ENCODE measurements at regions of chr2 and their contacts with region 1.

Region 1: DNA sequence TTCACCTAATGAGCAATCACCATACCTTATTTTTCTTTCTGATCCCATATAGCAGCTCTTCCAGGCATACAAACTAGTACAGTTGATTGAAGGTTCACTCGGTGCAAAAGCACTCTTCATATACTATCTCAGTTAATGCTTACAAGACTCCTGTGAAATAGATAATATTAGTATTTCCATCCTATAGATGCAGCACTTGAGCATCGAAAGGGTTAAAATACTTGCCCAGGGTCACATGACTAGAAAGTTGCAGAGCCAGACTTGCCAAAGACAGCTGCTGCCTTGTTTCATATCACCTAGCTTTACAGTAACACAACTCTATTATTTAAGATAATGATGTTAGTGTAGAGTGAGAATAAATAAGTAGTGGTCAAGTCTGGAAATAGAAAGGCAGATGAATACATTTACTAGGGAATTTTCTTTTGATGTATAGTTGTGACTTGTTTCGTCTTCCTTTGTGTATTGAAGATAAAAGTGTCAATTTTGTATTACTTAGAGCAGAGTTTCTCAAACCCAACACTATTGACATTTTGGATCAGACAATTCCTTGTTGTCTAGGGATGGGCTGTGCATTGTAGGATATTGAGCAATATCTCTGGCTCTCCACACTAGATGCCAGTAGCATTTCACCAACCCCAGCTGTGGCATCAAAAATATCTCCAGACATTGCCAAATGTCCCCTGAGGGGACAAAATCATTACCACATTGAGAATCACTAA is 466.1 kb upstream of the TNP1 start:
- DNase-seq: no peak

Region 2: DNA sequence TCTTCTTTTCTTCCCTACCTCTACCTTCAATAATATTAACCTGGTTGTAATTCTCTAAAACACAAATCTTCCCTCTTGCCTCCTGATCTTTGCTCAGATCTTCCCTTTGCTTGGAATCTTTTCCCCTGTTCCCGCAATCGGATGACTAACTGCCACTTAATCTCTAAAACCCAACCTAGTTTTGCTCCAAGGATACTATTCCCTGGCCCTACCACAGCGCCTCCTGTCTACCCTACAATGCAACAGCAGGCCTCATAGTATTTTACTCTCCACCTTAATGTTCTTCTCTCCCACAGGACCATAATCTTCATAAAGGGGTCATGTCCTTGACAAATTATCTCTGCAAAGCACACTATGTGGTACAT is 219.3 kb before region 1 on chr2:
- intact Hi-C with region 1: no loop called
- DNase-seq: no peak

Region 3: DNA sequence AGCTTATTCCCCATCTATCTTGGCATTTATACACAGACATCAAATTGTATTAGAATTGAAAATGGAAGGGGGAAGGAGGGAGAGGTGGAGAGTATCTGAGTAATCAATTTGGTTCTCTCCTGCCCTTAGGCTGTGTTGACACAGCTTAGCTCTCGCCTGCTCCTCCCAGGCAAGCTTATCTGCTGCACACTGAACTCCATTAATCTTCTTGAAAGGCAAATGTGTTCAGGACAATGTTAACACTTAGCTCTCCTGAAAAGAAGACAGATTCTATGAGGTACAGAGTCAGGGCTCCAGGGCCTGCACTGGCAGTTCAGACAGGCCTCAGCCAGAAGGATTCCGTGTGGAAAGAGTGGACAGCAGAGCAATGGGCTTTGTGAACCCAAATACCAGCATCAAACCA is 36.1 kb before region 1 on chr2:
- intact Hi-C with region 1: loop called (anchors 5 kb)
- DNase-seq: no peak

Region 4: GRCh38 chr2:217632043-217632442 is 306.1 kb after region 1 on chr2:
- intact Hi-C with region 1: no loop called
- DNase-seq: no peak